ENCODE measurements at regions of chr12 and their contacts with region 1.

Region 1: GRCh38 chr12:46124848-46125619 is 134.7 kb upstream of the SCAF11 start:
- DNase-seq: peak; percentile 42
- CTCF ChIP-seq: peak; percentile 81

Region 2: DNA sequence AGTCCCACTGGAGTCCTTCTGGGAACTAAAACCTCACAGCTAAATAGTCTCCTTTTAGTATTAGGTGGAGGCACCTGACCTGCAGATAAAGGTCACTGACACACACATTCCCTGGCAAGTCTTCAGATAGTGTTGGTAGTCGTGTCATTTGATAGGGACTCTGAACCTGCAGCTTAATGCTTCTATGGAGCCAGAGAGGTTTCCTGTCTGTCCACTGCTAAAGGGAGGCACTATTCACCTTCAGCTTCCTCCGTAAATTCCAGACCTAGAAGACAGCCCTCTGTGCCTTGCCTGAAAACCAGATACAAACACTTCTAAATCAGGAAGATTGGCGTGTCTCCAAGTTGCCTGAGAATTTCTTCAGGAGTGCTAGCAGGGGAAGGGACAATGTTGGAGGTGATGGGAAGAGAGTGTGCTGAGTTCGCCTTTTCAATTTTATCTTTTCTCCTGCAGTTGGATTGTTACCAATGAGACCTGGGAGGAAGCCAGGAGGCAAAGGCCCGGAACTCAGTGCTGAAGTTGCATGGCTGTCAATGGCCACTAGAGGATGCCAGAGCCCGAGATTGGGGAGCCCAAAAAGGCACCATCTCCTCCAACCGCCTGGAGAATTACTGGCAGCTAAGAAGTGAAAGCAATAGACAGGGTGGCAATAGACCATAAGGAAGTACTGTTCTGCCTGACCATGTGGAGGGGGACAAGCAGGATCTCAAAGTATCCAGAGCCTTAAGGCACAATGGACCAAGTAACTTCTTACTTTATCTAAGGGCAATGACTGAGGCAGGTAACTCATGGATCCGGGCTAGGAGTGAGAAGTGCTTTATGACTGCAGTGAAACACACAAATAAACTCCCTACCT is 53.0 kb before region 1 on chr12:
- CTCF ChIA-PET with region 1: interaction called, 24 read pairs
- POLR2A ChIA-PET with region 1: no interaction called
- DNase-seq: peak; percentile 68
- CTCF ChIP-seq: peak; percentile 89

Region 3: GRCh38 chr12:46108721-46109120 is 16.3 kb before region 1 on chr12:
- CTCF ChIA-PET with region 1: interaction called, 50 read pairs
- POLR2A ChIA-PET with region 1: no interaction called
- DNase-seq: peak; percentile 48
- CTCF ChIP-seq: no peak

Region 4: DNA sequence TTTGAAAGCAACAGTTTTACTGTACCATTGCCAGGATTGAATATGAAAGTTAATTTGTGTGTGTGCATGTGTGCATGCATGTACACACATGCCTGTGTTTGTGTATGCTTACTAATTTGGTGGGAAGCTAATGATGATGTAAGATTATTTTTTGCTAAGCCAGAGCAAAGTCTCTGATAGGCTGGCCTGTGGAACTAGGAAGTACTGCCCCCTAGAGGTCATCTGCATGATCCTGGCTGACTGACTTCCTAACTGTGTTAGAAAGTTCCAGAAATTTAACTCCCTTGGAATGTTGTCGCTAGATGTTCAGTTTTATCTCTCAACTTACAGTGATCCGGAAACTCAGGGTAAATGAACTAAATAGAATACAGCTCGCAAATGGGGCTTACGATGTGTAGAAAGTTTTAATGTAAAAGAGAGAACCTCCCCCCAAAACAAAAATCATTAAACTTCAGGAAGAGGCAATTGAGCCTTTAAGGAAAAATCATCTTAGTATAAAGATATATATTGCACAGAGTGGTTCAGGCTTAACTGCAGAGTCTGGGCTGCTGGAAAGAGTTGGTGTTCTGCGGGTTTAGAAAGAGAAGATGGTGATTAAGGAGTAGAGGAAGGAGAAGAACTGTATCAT is 178.1 kb after region 1 on chr12:
- CTCF ChIA-PET with region 1: interaction called, 31 read pairs
- POLR2A ChIA-PET with region 1: no interaction called
- DNase-seq: peak; percentile 47
- CTCF ChIP-seq: peak; percentile 24

Region 5: DNA sequence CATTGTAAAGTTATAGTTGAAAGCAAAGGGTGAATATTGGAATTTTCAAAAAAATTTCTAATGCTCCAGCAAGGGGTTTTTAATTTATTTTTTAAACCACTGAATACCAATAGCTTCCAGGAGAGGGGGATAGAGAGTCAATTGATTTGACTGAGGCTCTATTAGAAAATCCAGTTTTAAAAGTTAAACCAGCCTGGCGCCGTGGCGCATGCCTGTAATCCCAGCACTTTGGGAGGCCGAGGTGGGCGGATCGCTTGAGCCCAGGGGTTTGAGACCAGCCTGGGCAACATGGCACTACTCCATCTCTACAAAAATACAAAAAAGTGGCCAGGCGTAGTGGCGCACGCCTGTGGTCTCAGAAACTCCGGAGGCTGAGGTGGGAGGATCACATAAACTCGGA is 550.7 kb after region 1 on chr12:
- CTCF ChIA-PET with region 1: interaction called, 12 read pairs
- POLR2A ChIA-PET with region 1: no interaction called
- DNase-seq: peak; percentile 15
- CTCF ChIP-seq: peak; percentile 36

Region 6: DNA sequence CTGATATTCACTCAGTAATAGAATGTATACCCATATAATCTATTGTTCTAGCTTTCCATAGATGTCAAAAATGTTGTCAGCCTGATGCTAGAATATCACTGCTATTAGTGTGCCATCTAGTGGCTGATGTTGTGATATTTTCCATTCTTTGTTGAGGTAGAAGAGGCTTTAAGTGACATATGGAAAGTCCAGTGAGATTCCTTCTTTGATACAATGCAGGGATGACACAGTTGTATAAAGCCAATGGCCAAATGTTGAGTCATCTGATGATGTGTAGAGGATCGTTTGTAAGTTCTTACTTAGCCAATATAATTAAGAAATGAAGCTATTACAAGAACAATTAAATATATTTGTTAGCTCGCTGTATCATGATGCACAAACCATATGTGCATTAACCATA is 896.3 kb after region 1 on chr12:
- CTCF ChIA-PET with region 1: interaction called, 36 read pairs
- POLR2A ChIA-PET with region 1: no interaction called
- DNase-seq: peak; percentile 27
- CTCF ChIP-seq: peak; percentile 70